Activated CD4-positive, alpha-beta T cell treated with anti-CD3 and anti-CD28 coated beads, Interleukin-2, amount 10 ng/mL, durations not matched to agents 7 days and 5 days (primary cell): ENCODE measurements at regions of chr12 and their contacts with region 1.

Region 1: GRCh38 chr12:46268590-46269558 is at the start of gene SLC38A1:
- DNase-seq: peak; percentile 93
- H3K4me3 Mint-ChIP-seq: no peak within 1 kb of the TSS
- H3K27ac Mint-ChIP-seq: no peak within 1 kb of the TSS
- H3K4me1 Mint-ChIP-seq: peaks cover 24% of the 10 kb centered on the region
- H3K27me3 Mint-ChIP-seq: no peaks in the 10 kb centered on the region
- total RNA-seq, gene SLC38A1: 180 to 219 TPM

Region 2: DNA sequence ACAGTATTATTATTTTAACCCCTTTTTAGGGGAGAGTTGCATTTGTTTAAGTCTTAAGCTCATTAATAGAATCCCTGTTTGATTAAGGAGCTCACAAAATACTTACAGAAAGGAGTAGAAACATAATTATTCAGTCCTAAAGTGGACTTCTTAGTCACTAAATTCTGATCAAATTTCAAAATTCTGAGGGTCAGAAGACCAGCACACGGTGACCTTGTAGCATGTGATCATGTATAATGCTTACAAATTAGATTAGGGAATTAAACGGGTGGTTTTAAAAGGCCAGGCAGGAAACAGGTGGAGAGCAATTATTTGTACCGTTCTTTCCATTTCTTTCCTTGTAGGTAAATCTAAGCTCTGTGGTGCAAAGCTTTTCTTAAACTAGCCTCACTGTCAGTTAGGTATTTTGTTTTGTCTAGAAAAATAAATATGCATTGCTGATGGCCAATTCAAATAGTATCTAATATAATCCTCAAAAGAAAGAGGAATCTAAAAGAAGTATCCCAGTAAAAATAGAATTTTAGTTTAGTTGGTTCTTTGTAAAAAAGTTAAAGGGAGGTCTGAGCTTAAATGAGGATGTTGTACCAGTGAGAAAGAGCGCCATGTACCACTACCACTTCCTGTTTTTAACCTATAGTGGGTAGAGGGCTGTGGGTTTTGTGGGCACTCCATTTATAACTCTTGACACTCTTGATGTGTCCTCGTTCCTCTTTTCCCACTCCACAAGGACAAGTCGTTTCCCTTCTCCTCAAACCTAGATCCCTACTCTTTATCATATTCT is 51.1 kb before region 1 on chr12:
- CTCF ChIA-PET with region 1: interaction called, 6 read pairs
- POLR2A ChIA-PET with region 1: interaction called, 19 read pairs
- DNase-seq: peak; percentile 83
- H3K4me3 Mint-ChIP-seq: peak overlapping the region; percentile 72
- H3K27ac Mint-ChIP-seq: peak overlapping the region; percentile 97
- H3K4me1 Mint-ChIP-seq: peaks cover 95% of the 10 kb centered on the region
- H3K27me3 Mint-ChIP-seq: no peaks in the 10 kb centered on the region

Region 3: GRCh38 chr12:46253544-46254162 is 15.2 kb before region 1 on chr12:
- CTCF ChIA-PET with region 1: no interaction called
- POLR2A ChIA-PET with region 1: no interaction called
- DNase-seq: no peak
- H3K4me3 Mint-ChIP-seq: no peak overlapping the region
- H3K27ac Mint-ChIP-seq: no peak overlapping the region
- H3K4me1 Mint-ChIP-seq: peaks cover 59% of the 10 kb centered on the region
- H3K27me3 Mint-ChIP-seq: no peaks in the 10 kb centered on the region